ENCODE measurements at regions of chr2 and their contacts with region 1.

Region 1: GRCh38 chr2:97710596-97711386 is 2.6 kb upstream of the ZAP70 start:
- DNase-seq: peak in 3 of 14 experiments; percentile 32 to 51 (median 42)
- ATAC-seq: no peak
- H3K4me3 ChIP-seq: no peak overlapping the region
- H3K4me3 Mint-ChIP-seq: peak overlapping the region; percentile 51
- H3K27ac ChIP-seq: peak overlapping the region; percentile 5 to 9
- H3K27ac Mint-ChIP-seq: peak overlapping the region; percentile 98
- H3K4me1 ChIP-seq: peaks cover 62% of the 10 kb centered on the region
- H3K4me1 Mint-ChIP-seq: peaks cover 58% of the 10 kb centered on the region
- H3K27me3 ChIP-seq: no peaks in the 10 kb centered on the region
- H3K27me3 Mint-ChIP-seq: no peaks in the 10 kb centered on the region
- CTCF ChIP-seq: no peak

Region 2: DNA sequence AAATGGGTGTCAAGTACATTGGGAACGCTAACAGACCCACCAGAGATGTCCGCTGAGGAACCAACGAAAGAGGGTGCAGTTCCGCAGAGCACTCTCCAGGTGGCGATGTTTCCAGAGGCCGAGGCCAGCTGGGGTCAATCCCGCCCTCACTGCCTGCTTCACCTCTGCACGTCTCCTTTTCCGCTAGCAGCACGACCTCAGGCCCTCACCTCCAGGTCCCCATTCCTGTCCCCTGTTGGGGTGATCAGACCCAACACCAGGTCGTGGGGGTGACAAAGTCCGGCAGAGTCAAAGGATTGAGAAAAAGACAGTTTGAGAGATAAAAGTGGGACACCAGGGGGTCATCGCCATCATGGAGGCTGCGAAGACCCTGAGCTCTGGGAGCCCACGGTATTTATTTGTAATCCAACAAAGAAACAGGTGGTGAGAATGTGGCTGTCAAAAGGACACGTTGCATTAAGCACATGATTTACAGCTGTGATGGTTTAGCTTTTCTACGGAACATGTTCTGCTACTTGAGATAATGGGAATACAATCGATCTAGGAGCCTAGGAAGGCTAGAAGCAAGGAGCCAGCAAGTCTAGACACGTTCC is 29.9 kb after region 1 on chr2:
- CTCF ChIA-PET with region 1: interaction called, 10 read pairs
- POLR2A ChIA-PET with region 1: interaction called, 42 read pairs
- intact Hi-C with region 1: no loop called
- DNase-seq: peak in 7 of 14 experiments; percentile 31 to 72 (median 48)
- ATAC-seq: peak; percentile 27
- H3K4me3 ChIP-seq: no peak overlapping the region
- H3K4me3 Mint-ChIP-seq: no peak overlapping the region
- H3K27ac ChIP-seq: no peak overlapping the region
- H3K27ac Mint-ChIP-seq: peak overlapping the region; percentile 79
- H3K4me1 ChIP-seq: peaks cover 59% of the 10 kb centered on the region
- H3K4me1 Mint-ChIP-seq: peaks cover 65% of the 10 kb centered on the region
- H3K27me3 ChIP-seq: no peaks in the 10 kb centered on the region
- H3K27me3 Mint-ChIP-seq: no peaks in the 10 kb centered on the region
- CTCF ChIP-seq: peak; percentile 65

Region 3: GRCh38 chr2:97747716-97748115 is 36.9 kb after region 1 on chr2:
- CTCF ChIA-PET with region 1: interaction called, 23 read pairs
- POLR2A ChIA-PET with region 1: interaction called, 42 read pairs
- intact Hi-C with region 1: loop called (anchors 1 kb)
- DNase-seq: no peak
- ATAC-seq: no peak
- H3K4me3 ChIP-seq: no peak overlapping the region
- H3K4me3 Mint-ChIP-seq: no peak overlapping the region
- H3K27ac ChIP-seq: no peak overlapping the region
- H3K27ac Mint-ChIP-seq: peak overlapping the region; percentile 4
- H3K4me1 ChIP-seq: peaks cover 46% of the 10 kb centered on the region
- H3K4me1 Mint-ChIP-seq: peaks cover 52% of the 10 kb centered on the region
- H3K27me3 ChIP-seq: no peaks in the 10 kb centered on the region
- H3K27me3 Mint-ChIP-seq: no peaks in the 10 kb centered on the region
- CTCF ChIP-seq: no peak

Region 4: GRCh38 chr2:97849881-97850528 is 139.2 kb after region 1 on chr2:
- CTCF ChIA-PET with region 1: no interaction called
- POLR2A ChIA-PET with region 1: no interaction called
- intact Hi-C with region 1: no loop called
- DNase-seq: no peak
- ATAC-seq: no peak
- H3K4me3 ChIP-seq: no peak overlapping the region
- H3K4me3 Mint-ChIP-seq: no peak overlapping the region
- H3K27ac ChIP-seq: no peak overlapping the region
- H3K27ac Mint-ChIP-seq: no peak overlapping the region
- H3K4me1 ChIP-seq: peaks cover 10% of the 10 kb centered on the region
- H3K4me1 Mint-ChIP-seq: peaks cover 79% of the 10 kb centered on the region
- H3K27me3 ChIP-seq: no peaks in the 10 kb centered on the region
- H3K27me3 Mint-ChIP-seq: no peaks in the 10 kb centered on the region
- CTCF ChIP-seq: no peak

Region 5: GRCh38 chr2:98379672-98380535 is 669.1 kb after region 1 on chr2:
- CTCF ChIA-PET with region 1: no interaction called
- POLR2A ChIA-PET with region 1: no interaction called
- intact Hi-C with region 1: loop called in 1 of 2 experiments (anchors 5 kb)
- DNase-seq: no peak
- ATAC-seq: no peak
- H3K4me3 ChIP-seq: no peak overlapping the region
- H3K4me3 Mint-ChIP-seq: no peak overlapping the region
- H3K27ac ChIP-seq: no peak overlapping the region
- H3K27ac Mint-ChIP-seq: no peak overlapping the region
- H3K4me1 ChIP-seq: peaks cover 1% of the 10 kb centered on the region
- H3K4me1 Mint-ChIP-seq: no peaks in the 10 kb centered on the region
- H3K27me3 ChIP-seq: peaks cover 12 to 18% of the 10 kb centered on the region in 2 experiments
- H3K27me3 Mint-ChIP-seq: peaks cover 15% of the 10 kb centered on the region
- CTCF ChIP-seq: no peak